ENCODE measurements at regions of chr4 and their contacts with region 1.

Region 1: GRCh38 chr4:15729910-15730533 is 27.2 kb downstream of the BST1 start:
- DNase-seq: peak; percentile 33
- H3K4me3 ChIP-seq: no peak overlapping the region
- H3K27ac ChIP-seq: no peak overlapping the region
- H3K4me1 ChIP-seq: peaks cover 5% of the 10 kb centered on the region
- H3K27me3 ChIP-seq: no peaks in the 10 kb centered on the region
- CTCF ChIP-seq: peak; percentile 74

Region 2: GRCh38 chr4:15956179-15956850 is 226.3 kb after region 1 on chr4:
- CTCF ChIA-PET with region 1: no interaction called
- dilution Hi-C with region 1: no loop called
- in situ Hi-C with region 1: no loop called
- intact Hi-C with region 1: loop called (anchors 5 kb)
- DNase-seq: peak; percentile 68
- H3K4me3 ChIP-seq: no peak overlapping the region
- H3K27ac ChIP-seq: no peak overlapping the region
- H3K4me1 ChIP-seq: peaks cover 5% of the 10 kb centered on the region
- H3K27me3 ChIP-seq: no peaks in the 10 kb centered on the region
- CTCF ChIP-seq: peak; percentile 99 to 100

Region 3: GRCh38 chr4:16001484-16001858 is 271.4 kb after region 1 on chr4:
- CTCF ChIA-PET with region 1: no interaction called
- dilution Hi-C with region 1: no loop called
- in situ Hi-C with region 1: no loop called
- intact Hi-C with region 1: loop called (anchors 1 kb)
- DNase-seq: peak; percentile 56
- H3K4me3 ChIP-seq: no peak overlapping the region
- H3K27ac ChIP-seq: no peak overlapping the region
- H3K4me1 ChIP-seq: no peaks in the 10 kb centered on the region
- H3K27me3 ChIP-seq: peaks cover 6% of the 10 kb centered on the region
- CTCF ChIP-seq: peak; percentile 80 to 86

Region 4: GRCh38 chr4:16078195-16078760 is 348.3 kb after region 1 on chr4:
- CTCF ChIA-PET with region 1: no interaction called
- dilution Hi-C with region 1: no loop called
- in situ Hi-C with region 1: no loop called
- intact Hi-C with region 1: no loop called
- DNase-seq: peak; percentile 16
- H3K4me3 ChIP-seq: no peak overlapping the region
- H3K27ac ChIP-seq: no peak overlapping the region
- H3K4me1 ChIP-seq: peaks cover 17% of the 10 kb centered on the region
- H3K27me3 ChIP-seq: peaks cover 19% of the 10 kb centered on the region
- CTCF ChIP-seq: no peak

Measured in mammary epithelial cell (primary cell).